ENCODE measurements at regions of chr16 and their contacts with region 1.

Region 1: DNA sequence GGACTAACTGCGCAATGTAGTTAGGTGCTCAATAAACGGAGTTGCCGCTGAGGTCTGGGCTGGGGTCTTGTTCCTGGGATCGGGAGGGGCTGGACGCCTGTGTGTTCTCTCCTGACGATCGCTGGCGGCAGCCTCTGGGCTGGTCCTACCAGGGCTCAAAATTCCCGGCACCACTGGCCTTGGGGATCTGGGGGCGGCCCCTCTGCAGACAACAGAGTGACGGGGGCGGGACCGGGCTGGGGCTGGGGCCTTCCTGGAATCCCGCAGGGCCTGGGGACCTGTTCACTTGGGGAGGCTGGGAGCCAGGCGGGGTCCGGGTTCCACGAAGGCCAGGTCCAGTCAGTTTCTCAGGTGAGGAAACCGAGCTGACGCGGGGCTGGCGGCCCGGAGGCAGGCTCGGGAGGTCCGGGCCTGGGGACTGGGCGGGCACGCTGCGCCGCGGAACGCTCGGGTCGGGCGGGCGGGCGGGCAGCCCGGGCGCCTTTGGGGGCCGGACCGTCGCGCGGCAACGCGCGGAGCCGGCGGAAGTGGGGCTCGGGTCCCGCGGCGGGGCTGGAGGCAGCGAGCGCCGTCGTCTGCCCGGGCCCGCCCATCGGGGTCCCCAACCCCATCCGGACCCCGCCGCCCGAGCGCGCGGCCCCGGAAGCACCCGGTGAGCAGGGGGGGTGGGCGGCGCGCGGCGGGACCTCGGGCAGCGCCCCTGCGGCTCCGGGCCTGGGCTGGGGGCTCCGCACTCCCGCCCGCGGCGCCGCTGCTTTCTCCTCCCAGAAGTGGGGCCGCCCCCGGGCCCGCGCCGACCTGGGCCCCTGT is at the start of gene PIGQ:
- DNase-seq: peak; percentile 81
- ATAC-seq: peak; percentile 62 to 75
- total RNA-seq, gene PIGQ: 19.1 to 21.3 TPM

Region 2: DNA sequence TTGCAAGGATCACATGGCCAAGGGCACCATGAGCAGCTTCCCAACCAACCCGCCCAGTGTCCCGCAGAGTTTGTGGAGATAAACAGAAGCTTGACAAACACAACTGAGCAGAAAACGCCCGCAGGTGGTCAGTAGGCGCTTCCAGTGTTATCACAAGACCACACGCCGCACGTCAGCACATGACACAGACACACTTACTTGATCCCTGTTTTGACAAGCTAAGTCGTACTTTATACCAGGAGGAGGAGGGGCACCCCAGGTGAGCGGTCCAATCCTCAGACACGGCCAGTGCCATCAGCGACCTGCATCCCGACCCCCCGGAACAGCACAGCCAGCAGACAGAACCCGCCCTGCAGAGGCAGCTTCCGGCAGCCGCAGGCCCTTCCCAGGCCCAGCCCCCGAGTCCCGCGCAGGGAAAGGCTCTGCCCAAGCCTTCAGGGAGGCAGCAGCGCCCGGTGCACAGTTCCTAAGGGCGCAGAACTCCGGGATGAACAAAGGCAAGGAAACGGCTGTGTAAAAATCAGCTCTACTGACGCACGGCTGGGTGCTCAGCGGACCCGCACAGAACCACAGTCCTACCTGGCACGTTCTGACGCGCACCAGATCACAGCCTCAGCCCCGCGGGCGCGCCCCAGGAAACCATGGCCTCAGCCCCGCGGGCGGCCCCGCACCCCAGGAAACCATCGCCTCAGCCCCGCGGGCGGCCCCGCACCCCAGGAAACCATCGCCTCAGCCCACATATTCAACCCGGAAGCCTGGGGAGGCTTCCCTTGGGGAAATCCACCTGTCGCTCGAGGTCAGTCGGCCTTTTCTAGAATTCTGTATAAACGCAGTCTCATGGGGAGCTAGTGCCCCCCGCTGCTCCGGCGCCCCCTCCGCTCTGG is 245.0 kb before region 1 on chr16:
- intact Hi-C with region 1: no loop called
- DNase-seq: no peak
- ATAC-seq: peak; percentile 18 to 28

Region 3: GRCh38 chr16:521381-522210 is 48.1 kb before region 1 on chr16:
- intact Hi-C with region 1: no loop called
- DNase-seq: no peak
- ATAC-seq: no peak

Region 4: DNA sequence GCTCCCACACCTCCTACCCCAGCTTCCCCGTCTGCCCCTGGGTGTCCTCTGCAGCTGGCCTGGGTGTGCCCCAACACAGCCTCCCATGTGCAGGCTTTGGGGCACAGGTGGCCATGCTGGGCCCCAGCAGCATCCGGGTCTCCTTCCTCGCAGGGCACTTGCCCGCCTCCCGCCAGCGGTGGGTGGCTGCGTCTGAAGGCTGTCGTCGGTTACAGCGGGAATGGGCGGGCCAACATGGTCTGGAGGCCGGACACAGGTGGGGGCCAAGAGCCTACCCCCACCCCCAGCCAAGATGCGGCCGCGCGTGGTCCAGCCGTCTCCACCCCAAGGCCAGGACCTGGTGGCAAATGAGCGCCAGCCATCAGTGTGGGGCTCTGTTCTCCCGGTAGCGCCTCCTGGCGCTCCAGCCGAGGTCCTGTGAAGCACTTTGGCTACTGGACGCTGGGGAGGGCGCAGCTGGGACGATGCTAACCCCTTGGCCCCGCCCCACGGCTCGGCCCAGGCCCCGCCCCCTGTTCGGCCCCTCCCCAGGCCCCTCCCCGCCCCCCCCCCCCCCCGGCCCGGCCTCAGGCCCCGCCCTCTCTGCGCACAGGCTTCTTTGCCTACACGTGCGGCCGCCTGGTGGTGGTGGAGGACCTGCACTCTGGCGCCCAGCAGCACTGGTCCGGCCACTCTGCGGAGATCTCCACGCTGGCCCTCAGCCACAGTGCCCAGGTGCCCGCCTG is 91.0 kb after region 1 on chr16:
- intact Hi-C with region 1: loop called in 1 of 2 experiments (anchors 5 kb)
- DNase-seq: peak; percentile 92
- ATAC-seq: peak; percentile 79 to 90